ENCODE measurements at regions of chr12 and their contacts with region 1.

Region 1: DNA sequence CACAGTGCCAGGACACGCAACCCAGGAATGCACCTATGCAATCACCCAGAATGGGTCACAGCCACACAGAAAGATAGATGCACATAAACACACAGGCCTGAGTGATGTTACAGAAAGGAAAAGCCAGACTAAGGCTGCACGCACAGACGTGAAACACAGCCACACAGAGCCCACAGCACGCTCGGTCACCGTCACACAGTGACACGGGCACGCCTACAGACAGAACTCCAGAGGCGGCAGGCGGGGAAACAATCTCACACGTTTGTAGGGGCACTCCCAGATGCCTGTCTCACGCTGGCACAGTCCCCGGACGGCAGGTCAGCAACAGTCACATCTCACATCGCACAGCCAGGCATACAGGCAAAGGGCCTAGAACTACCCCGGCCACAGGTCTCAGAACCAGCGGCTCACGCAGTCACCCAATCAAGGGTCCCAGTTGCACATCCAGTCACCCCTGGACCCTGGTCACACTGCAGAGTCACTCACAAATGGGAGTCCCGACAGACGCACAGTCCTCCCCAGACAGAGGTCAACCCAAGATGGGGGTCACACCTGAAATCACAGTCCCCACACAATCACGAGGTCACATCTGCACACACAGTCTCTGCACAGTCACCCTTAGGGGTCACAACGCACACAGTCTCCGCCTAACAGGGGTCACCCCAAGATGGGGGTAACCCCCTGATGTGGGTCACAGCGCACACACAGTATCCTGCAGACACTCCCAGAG is 790 bp downstream of the SSH1 start:
- DNase-seq: peak; percentile 59
- ATAC-seq: peak; percentile 2
- H3K4me3 ChIP-seq: peak overlapping the region; percentile 43 to 76 (median 71)
- H3K4me3 Mint-ChIP-seq: peak overlapping the region; percentile 99
- H3K27ac ChIP-seq: peak overlapping the region in 1 of 2 donors; percentile 56
- H3K27ac Mint-ChIP-seq: peak overlapping the region; percentile 96
- H3K4me1 ChIP-seq: peaks cover 29 to 44% of the 10 kb centered on the region in 2 donors
- H3K4me1 Mint-ChIP-seq: peaks cover 52% of the 10 kb centered on the region
- H3K27me3 ChIP-seq: peaks cover 0 to 4% (median 0%) of the 10 kb centered on the region in 4 experiments
- H3K27me3 Mint-ChIP-seq: no peaks in the 10 kb centered on the region
- CTCF ChIP-seq: no peak

Region 2: GRCh38 chr12:108884116-108885012 is 27.8 kb after region 1 on chr12:
- CTCF ChIA-PET with region 1: interaction called, 27 read pairs
- POLR2A ChIA-PET with region 1: interaction called, 3 read pairs
- intact Hi-C with region 1: no loop called
- DNase-seq: peak; percentile 76
- ATAC-seq: peak; percentile 67
- H3K4me3 ChIP-seq: no peak overlapping the region
- H3K4me3 Mint-ChIP-seq: no peak overlapping the region
- H3K27ac ChIP-seq: no peak overlapping the region
- H3K27ac Mint-ChIP-seq: no peak overlapping the region
- H3K4me1 ChIP-seq: peaks cover 0 to 5% of the 10 kb centered on the region in 2 donors
- H3K4me1 Mint-ChIP-seq: no peaks in the 10 kb centered on the region
- H3K27me3 ChIP-seq: peaks cover 0 to 12% (median 0%) of the 10 kb centered on the region in 4 experiments
- H3K27me3 Mint-ChIP-seq: no peaks in the 10 kb centered on the region
- CTCF ChIP-seq: peak; percentile 79

Region 3: GRCh38 chr12:109052414-109053323 is 196.1 kb after region 1 on chr12 and contains the start of gene USP30:
- CTCF ChIA-PET with region 1: no interaction called
- POLR2A ChIA-PET with region 1: interaction called, 8 read pairs
- intact Hi-C with region 1: loop called (anchors 2 kb)
- DNase-seq: peak; percentile 92
- ATAC-seq: peak; percentile 86
- H3K4me3 ChIP-seq: peak within 1 kb of the TSS; percentile 75 to 94 (median 89)
- H3K4me3 Mint-ChIP-seq: peak within 1 kb of the TSS; percentile 90
- H3K27ac ChIP-seq: peak within 1 kb of the TSS; percentile 78 to 82
- H3K27ac Mint-ChIP-seq: peak within 1 kb of the TSS; percentile 92
- H3K4me1 ChIP-seq: peaks cover 8 to 24% of the 10 kb centered on the region in 2 donors
- H3K4me1 Mint-ChIP-seq: peaks cover 22% of the 10 kb centered on the region
- H3K27me3 ChIP-seq: no peaks in the 10 kb centered on the region
- H3K27me3 Mint-ChIP-seq: no peaks in the 10 kb centered on the region
- CTCF ChIP-seq: no peak
- total RNA-seq, gene USP30: 24.7 and 32.5 TPM in 2 replicates

Region 4: DNA sequence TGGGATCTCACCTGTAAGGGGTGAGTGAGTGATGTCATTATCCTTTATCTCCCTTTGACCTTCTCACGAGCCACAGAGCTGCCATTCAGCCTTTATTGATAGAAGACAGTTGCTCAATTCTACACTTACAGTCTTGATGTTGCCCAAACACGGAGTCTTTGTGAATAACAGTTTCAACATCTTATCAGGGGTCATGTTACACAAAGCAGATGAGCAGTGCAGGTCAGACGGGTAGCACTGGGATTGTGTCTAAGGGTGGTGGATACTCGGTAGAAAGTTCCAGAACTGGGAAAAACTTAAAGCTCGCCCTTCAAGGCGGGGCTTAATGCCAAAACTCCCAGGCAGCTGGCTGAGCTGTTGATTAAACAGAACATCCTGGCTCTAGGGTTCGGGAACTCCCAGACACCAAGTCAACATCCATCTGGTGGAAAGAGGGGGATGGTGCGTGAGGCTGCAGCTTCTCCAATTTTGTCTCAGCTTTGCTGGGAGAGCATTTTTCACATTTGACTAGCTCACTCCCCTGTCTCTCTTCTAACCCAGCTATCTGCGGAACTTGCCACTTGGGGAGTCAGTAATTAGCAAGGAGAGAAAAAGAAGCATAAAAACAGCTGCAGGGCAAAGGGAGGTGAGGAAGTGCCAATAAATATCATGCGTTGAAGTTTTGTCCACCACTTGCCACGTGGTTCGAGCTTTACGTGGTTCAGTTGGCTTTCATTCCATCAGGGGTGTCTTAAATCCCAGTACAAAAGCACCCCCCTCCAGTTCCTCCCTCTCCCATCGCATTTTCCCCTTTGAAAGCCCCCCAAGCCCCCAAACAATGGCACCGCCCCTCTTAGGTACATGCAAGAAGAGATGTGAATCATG is 421.5 kb after region 1 on chr12:
- CTCF ChIA-PET with region 1: no interaction called
- POLR2A ChIA-PET with region 1: no interaction called
- intact Hi-C with region 1: no loop called
- DNase-seq: no peak
- ATAC-seq: no peak
- H3K4me3 ChIP-seq: no peak overlapping the region
- H3K4me3 Mint-ChIP-seq: no peak overlapping the region
- H3K27ac ChIP-seq: no peak overlapping the region
- H3K27ac Mint-ChIP-seq: no peak overlapping the region
- H3K4me1 ChIP-seq: no peaks in the 10 kb centered on the region
- H3K4me1 Mint-ChIP-seq: no peaks in the 10 kb centered on the region
- H3K27me3 ChIP-seq: no peaks in the 10 kb centered on the region
- H3K27me3 Mint-ChIP-seq: peaks cover 17% of the 10 kb centered on the region
- CTCF ChIP-seq: no peak